ENCODE measurements at regions of chr13 and their contacts with region 1.

Region 1: DNA sequence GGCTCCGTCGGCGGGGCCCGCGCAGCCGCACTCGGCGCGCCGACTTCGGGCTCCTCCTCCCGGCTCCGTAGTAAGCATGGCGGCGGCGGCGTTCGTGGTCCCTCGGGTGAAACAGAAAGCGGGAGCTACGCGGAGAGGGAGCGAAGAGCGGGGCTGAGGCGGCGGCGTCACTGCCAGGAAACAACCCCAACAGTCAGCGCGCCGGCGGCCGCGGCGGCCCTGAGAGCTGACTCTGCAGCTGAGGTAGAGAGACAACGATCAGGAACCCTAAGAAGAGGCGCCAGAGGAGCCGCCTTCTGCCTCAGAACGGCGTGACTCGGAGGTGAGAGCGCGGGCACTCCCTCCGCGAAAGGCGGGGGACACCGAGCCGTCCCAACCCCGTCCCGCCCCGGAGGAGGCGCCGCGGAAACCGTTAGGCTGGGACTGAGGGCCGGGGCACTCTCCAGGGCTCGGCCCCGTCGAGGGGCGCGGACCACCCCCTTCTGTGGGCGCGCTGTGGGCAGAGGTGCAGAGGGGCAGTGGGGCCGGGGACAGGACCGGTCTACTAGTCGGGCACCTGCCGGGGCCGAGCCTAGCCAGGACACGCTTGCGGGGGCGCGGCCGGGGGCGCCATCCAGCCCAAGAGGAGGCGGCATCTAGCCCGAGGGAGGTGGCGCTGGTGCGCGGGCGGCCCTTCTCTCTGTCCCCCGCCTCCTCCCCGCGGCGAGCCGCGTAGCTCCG is at the start of gene FNDC3A:
- DNase-seq: peak; percentile 81 to 85
- ATAC-seq: peak; percentile 92 to 98 (median 94)
- H3K4me3 ChIP-seq: peak within 1 kb of the TSS; percentile 78 to 97 (median 90)
- H3K27ac ChIP-seq: peak within 1 kb of the TSS; percentile 95 to 99 (median 98)
- H3K4me1 ChIP-seq: peaks cover 0 to 49% (median 31%) of the 10 kb centered on the region in 9 donors
- H3K27me3 ChIP-seq: no peaks in the 10 kb centered on the region
- CTCF ChIP-seq: peak in 6 of 9 donors; percentile 4 to 35 (median 21)
- total RNA-seq, gene FNDC3A: 18.9 to 30.3 (median 23.6) TPM

Region 2: GRCh38 chr13:48783181-48783630 is 192.8 kb before region 1 on chr13:
- intact Hi-C with region 1: loop called in 3 of 10 experiments (anchors 5 to 10 kb)
- DNase-seq: peak; percentile 62 to 65
- ATAC-seq: peak; percentile 48 to 95 (median 90)
- H3K4me3 ChIP-seq: no peak overlapping the region
- H3K27ac ChIP-seq: peak overlapping the region in 8 of 10 donors; percentile 43 to 79 (median 51)
- H3K4me1 ChIP-seq: peaks cover 0 to 20% (median 0%) of the 10 kb centered on the region in 9 donors
- H3K27me3 ChIP-seq: no peaks in the 10 kb centered on the region
- CTCF ChIP-seq: peak in 1 of 9 donors; percentile 7

Region 3: GRCh38 chr13:48930918-48931317 is 45.1 kb before region 1 on chr13:
- intact Hi-C with region 1: no loop called
- DNase-seq: no peak
- ATAC-seq: no peak
- H3K4me3 ChIP-seq: no peak overlapping the region
- H3K27ac ChIP-seq: no peak overlapping the region
- H3K4me1 ChIP-seq: no peaks in the 10 kb centered on the region
- H3K27me3 ChIP-seq: no peaks in the 10 kb centered on the region
- CTCF ChIP-seq: no peak

Region 4: DNA sequence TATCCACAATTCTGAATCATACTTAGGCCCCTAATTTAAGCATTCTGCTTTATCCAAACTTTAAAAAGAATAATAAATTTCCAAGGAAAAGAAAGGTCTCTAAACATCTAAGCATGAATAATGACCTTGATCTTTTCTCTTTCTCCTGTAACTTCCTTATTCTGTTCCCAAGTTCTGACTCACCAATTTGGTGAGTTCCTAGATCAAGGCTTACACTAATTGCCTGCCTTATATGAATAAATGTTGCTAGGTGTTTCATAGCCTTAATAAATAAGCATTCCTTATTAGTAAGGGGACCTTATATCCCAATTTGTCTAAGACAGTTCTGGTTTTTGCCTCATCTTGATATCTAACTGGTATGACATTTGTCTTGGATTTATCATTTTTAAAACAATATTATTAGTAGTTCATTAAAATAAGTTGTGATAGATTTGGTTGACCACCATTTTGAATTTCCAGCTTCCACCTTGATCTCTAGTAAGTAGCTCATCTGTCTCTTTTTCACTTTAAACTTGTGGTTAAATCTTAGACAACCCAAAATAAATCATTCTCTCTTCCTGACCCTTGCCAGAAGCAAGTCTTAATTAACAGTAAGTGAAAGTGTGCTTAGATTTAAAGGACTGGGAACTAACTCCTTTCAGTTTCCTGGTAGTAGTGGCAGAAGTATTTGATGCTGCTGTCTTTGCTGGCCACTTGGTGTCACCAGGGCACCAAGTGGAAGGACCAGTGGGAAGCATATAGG is 122.9 kb after region 1 on chr13:
- intact Hi-C with region 1: loop called in 4 of 10 experiments (anchors 5 to 10 kb)
- DNase-seq: no peak
- ATAC-seq: peak in 4 of 8 donors; percentile 59 to 68 (median 62)
- H3K4me3 ChIP-seq: no peak overlapping the region
- H3K27ac ChIP-seq: peak overlapping the region; percentile 37 to 84 (median 76)
- H3K4me1 ChIP-seq: peaks cover 10 to 40% (median 30%) of the 10 kb centered on the region in 9 donors
- H3K27me3 ChIP-seq: no peaks in the 10 kb centered on the region
- CTCF ChIP-seq: peak; percentile 11 to 69 (median 50)

Region 5: GRCh38 chr13:49110122-49110912 is 134.3 kb after region 1 on chr13:
- intact Hi-C with region 1: loop called in 2 of 10 experiments (anchors 10 kb)
- DNase-seq: peak; percentile 64 to 84
- ATAC-seq: peak; percentile 60 to 94 (median 86)
- H3K4me3 ChIP-seq: peak overlapping the region; percentile 41 to 70 (median 57)
- H3K27ac ChIP-seq: peak overlapping the region in 9 of 10 donors; percentile 50 to 85 (median 57)
- H3K4me1 ChIP-seq: peaks cover 3 to 52% (median 36%) of the 10 kb centered on the region in 9 donors
- H3K27me3 ChIP-seq: no peaks in the 10 kb centered on the region
- CTCF ChIP-seq: no peak

Region 6: GRCh38 chr13:49165798-49166752 is 190.1 kb after region 1 on chr13:
- intact Hi-C with region 1: no loop called
- DNase-seq: no peak
- ATAC-seq: peak in 4 of 8 donors; percentile 14 to 76 (median 42)
- H3K4me3 ChIP-seq: no peak overlapping the region
- H3K27ac ChIP-seq: no peak overlapping the region
- H3K4me1 ChIP-seq: peaks cover 0 to 7% (median 0%) of the 10 kb centered on the region in 9 donors
- H3K27me3 ChIP-seq: no peaks in the 10 kb centered on the region
- CTCF ChIP-seq: no peak

Region 7: DNA sequence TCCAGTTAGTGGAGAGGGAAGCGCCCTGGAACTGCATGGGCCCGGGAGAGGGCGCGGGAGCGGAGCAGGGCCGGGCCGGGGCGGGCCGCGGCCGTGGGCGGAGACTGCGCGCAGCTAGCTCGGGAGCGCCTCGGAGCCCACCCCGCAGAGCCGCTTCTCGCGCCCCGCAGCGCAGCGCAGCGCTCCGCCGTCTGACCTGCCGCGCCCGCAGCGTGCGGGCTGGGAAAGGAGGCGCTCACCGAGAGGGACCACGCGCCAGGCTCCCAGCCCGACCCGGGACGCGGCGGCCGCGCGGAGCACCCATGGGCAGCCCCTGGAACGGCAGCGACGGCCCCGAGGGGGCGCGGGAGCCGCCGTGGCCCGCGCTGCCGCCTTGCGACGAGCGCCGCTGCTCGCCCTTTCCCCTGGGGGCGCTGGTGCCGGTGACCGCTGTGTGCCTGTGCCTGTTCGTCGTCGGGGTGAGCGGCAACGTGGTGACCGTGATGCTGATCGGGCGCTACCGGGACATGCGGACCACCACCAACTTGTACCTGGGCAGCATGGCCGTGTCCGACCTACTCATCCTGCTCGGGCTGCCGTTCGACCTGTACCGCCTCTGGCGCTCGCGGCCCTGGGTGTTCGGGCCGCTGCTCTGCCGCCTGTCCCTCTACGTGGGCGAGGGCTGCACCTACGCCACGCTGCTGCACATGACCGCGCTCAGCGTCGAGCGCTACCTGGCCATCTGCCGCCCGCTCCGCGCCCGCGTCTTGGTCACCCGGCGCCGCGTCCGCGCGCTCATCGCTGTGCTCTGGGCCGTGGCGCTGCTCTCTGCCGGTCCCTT is 244.2 kb after region 1 on chr13 and contains the start of gene MLNR:
- intact Hi-C with region 1: loop called in 1 of 10 experiments (anchors 10 kb)
- DNase-seq: peak; percentile 16 to 31
- ATAC-seq: peak; percentile 62 to 83 (median 72)
- H3K4me3 ChIP-seq: peak within 1 kb of the TSS; percentile 18 to 52 (median 40)
- H3K27ac ChIP-seq: no peak within 1 kb of the TSS
- H3K4me1 ChIP-seq: peaks cover 0 to 25% (median 10%) of the 10 kb centered on the region in 9 donors
- H3K27me3 ChIP-seq: peaks cover 12 to 62% (median 53%) of the 10 kb centered on the region in 7 donors
- CTCF ChIP-seq: peak in 2 of 9 donors; percentile 18 to 19
- total RNA-seq, gene MLNR: not detected